ENCODE measurements at regions of chr4 and their contacts with region 1.

Region 1: DNA sequence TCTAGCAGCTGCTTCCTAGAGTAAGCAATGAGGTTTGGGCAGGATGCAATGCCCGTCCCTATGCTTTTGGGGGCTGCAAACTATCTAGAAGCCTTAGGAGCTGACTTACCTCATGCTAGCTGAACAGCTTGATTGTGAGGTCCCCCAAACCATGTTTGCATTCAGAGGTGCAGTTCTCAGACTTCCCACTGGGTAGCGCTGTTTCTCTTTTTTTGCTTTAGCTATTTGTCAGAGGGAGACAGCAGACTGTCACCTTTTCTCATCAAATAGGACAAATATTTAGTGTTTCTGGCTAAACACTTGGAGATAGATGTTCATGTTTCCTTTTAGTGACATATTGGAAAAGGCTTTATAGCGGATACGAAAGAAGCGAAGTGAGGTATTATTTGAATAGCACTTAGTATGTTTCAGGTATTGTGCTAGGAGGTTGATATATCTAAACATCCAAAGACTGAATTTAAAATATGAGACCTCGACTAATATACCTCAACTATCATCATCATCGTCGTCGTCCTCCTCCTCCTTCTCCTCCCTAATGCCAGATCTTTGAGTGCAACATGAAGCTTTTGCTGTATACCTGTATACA is 18.7 kb upstream of the TMEM192 start:
- DNase-seq: no peak

Region 2: GRCh38 chr4:164799410-164799809 is 331.9 kb before region 1 on chr4:
- intact Hi-C with region 1: no loop called
- DNase-seq: no peak

Region 3: GRCh38 chr4:165355900-165356300 is 224.6 kb after region 1 on chr4:
- intact Hi-C with region 1: loop called (anchors 10 kb)
- DNase-seq: no peak

Measured in posterior vena cava (tissue), 2 donors.